GM12878 (cell line): ENCODE measurements at regions of chr21 and their contacts with region 1.

Region 1: GRCh38 chr21:33924079-33924765 is 8.6 kb upstream of the ATP5PO start:
- DNase-seq: peak; percentile 67
- ATAC-seq: peak; percentile 99
- H3K4me3 ChIP-seq: no peak overlapping the region
- H3K27ac ChIP-seq: no peak overlapping the region
- H3K4me1 ChIP-seq: peaks cover 7% of the 10 kb centered on the region
- H3K27me3 ChIP-seq: no peaks in the 10 kb centered on the region
- CTCF ChIP-seq: peak; percentile 87 to 98 (median 91); a peak in 5 of 6 replicates
- EP300 ChIP-seq: no peak
- POLR2A ChIP-seq: no peak
- RAD21 ChIP-seq: peak; percentile 100

Region 2: GRCh38 chr21:33848249-33848953 is 75.8 kb before region 1 on chr21:
- CTCF ChIA-PET with region 1: no interaction called
- POLR2A ChIA-PET with region 1: no interaction called
- RAD21 ChIA-PET with region 1: no interaction called
- SMC1A ChIA-PET with region 1: no interaction called
- in situ Hi-C with region 1: no loop called
- intact Hi-C with region 1: no loop called
- DNase-seq: no peak
- ATAC-seq: peak; percentile 69
- H3K4me3 ChIP-seq: no peak overlapping the region
- H3K27ac ChIP-seq: no peak overlapping the region
- H3K4me1 ChIP-seq: no peaks in the 10 kb centered on the region
- H3K27me3 ChIP-seq: no peaks in the 10 kb centered on the region
- CTCF ChIP-seq: no peak
- EP300 ChIP-seq: no peak
- POLR2A ChIP-seq: no peak
- RAD21 ChIP-seq: no peak

Region 3: DNA sequence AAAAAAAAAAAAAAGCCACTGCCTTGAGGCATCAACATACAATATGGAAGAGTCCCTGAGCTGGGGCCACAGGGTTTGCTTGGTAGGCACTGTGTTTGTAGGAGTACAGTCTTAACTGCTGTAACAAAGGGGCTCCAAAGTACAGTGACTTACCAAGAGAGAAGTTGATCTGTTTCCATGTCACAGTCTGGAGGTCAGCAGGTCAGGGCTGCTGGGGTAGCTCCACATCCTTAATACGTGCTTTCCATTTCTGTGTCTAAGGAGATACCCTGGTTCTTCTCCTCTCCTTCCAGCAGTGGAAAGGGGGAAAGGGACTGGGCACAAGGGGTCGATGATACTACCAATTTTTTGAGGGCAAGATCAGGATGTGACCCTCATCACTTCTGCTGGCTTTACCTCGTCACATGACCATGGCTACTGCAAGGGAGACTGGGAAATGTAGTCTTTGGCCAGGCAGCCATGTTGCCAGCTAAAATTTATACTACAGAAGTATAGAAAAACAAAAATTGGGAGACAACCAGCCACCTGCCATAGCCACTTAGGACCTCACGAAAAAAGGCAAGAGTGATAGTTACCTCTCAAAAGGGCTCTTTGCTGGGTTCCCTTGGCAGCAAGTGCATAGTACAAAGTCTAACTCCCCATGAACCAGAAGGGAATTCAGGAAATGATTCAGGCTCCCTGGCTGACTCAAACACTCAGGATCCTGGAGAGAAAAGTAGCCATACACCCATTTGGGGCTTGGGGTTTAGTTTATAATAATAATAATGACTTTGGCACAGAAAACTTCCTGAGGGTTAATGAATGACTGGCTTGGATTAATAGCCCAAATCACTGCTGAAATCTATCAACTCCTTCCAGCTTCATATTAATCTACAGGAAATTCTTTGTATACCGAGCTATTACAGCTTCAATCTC is 44.1 kb after region 1 on chr21:
- CTCF ChIA-PET with region 1: interaction called, 21 read pairs
- POLR2A ChIA-PET with region 1: no interaction called
- RAD21 ChIA-PET with region 1: interaction called, 15 read pairs
- SMC1A ChIA-PET with region 1: interaction called, 45 read pairs
- in situ Hi-C with region 1: no loop called
- intact Hi-C with region 1: no loop called
- DNase-seq: no peak
- ATAC-seq: peak; percentile 96
- H3K4me3 ChIP-seq: no peak overlapping the region
- H3K27ac ChIP-seq: no peak overlapping the region
- H3K4me1 ChIP-seq: no peaks in the 10 kb centered on the region
- H3K27me3 ChIP-seq: no peaks in the 10 kb centered on the region
- CTCF ChIP-seq: no peak
- EP300 ChIP-seq: no peak
- POLR2A ChIP-seq: no peak
- RAD21 ChIP-seq: no peak

Region 4: DNA sequence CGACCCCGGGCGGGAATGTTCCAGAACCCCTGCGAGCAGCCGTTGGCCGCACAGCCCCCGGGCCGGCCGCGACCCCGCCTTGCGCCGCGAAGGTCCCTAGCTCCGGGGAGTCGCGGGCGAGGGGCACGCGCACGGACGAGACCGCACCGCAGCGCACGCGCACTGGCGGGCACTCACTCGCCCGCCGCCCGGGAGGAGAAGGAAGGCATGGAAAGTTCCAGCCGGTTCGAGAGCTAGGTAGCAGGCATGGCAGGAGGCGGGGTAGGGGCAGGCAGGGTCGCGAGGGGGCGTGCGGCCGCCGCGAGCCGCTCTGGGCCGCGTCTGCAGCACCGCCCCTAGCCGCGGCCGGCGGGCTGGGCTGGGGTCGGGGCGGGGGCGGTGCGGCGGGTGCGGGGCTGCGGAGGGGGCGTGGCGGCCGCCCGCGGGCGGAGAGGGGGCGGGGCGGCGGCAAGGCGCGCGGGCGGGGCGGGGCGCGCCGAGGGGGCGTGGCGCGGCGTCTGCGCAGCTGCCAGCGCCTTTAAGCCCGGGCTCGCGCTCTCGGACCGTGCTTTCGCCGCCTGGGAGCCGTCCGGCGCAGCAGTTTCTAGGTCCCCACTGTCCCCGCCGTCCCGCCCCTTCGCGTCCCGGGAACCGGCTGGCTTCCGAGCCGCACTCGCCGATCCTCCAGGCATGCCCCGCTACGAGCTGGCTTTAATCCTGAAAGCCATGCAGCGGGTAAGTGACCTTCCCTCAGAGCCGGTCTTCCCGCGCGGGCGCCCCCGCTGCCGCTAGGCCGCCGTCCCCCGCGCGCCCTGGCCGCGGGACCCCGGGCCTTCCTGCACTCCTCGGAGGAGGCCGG is 149.0 kb after region 1 on chr21 and contains the starts of genes MRPS6 and SLC5A3:
- CTCF ChIA-PET with region 1: interaction called, 29 read pairs
- POLR2A ChIA-PET with region 1: interaction called, 3 read pairs
- RAD21 ChIA-PET with region 1: interaction called, 20 read pairs
- SMC1A ChIA-PET with region 1: interaction called, 41 read pairs
- in situ Hi-C with region 1: no loop called
- intact Hi-C with region 1: loop called (anchors 5 kb)
- DNase-seq: no peak
- ATAC-seq: peak; percentile 75
- H3K4me3 ChIP-seq: peak within 1 kb of the TSS; percentile 91
- H3K27ac ChIP-seq: peak within 1 kb of the TSS; percentile 72
- H3K4me1 ChIP-seq: peaks cover 11% of the 10 kb centered on the region
- H3K27me3 ChIP-seq: no peaks in the 10 kb centered on the region
- CTCF ChIP-seq: no peak; a peak in 1 of 6 replicates
- EP300 ChIP-seq: no peak; a peak in 1 of 4 replicates
- POLR2A ChIP-seq: peak; percentile 98
- RAD21 ChIP-seq: no peak
- polyA plus RNA-seq, gene MRPS6: 55.6 to 95.2 TPM
- polyA plus RNA-seq, gene SLC5A3: 3.3 to 4.7 TPM

Region 5: GRCh38 chr21:34100790-34101189 is 176.6 kb after region 1 on chr21:
- CTCF ChIA-PET with region 1: interaction called, 16 read pairs
- POLR2A ChIA-PET with region 1: interaction called, 3 read pairs
- RAD21 ChIA-PET with region 1: interaction called, 4 read pairs
- SMC1A ChIA-PET with region 1: interaction called, 4 read pairs
- in situ Hi-C with region 1: no loop called
- intact Hi-C with region 1: no loop called
- DNase-seq: no peak
- ATAC-seq: no peak
- H3K4me3 ChIP-seq: no peak overlapping the region
- H3K27ac ChIP-seq: no peak overlapping the region
- H3K4me1 ChIP-seq: peaks cover 7% of the 10 kb centered on the region; the same call in 1 of the 2 replicates
- H3K27me3 ChIP-seq: no peaks in the 10 kb centered on the region
- CTCF ChIP-seq: no peak
- EP300 ChIP-seq: no peak
- POLR2A ChIP-seq: no peak
- RAD21 ChIP-seq: no peak

Region 6: GRCh38 chr21:34243562-34243961 is 319.3 kb after region 1 on chr21:
- CTCF ChIA-PET with region 1: interaction called, 41 read pairs
- POLR2A ChIA-PET with region 1: no interaction called
- RAD21 ChIA-PET with region 1: interaction called, 27 read pairs
- SMC1A ChIA-PET with region 1: interaction called, 29 read pairs
- in situ Hi-C with region 1: no loop called
- intact Hi-C with region 1: loop called (anchors 5 kb)
- DNase-seq: no peak
- ATAC-seq: 0 out of 3 replicates have a peak, but pooled peaks have one; percentile 48
- H3K4me3 ChIP-seq: no peak overlapping the region
- H3K27ac ChIP-seq: no peak overlapping the region
- H3K4me1 ChIP-seq: no peaks in the 10 kb centered on the region
- H3K27me3 ChIP-seq: no peaks in the 10 kb centered on the region
- CTCF ChIP-seq: peak; percentile 43 to 60 (median 49); a peak in 5 of 6 replicates
- EP300 ChIP-seq: no peak
- POLR2A ChIP-seq: no peak
- RAD21 ChIP-seq: peak; percentile 58

Region 7: DNA sequence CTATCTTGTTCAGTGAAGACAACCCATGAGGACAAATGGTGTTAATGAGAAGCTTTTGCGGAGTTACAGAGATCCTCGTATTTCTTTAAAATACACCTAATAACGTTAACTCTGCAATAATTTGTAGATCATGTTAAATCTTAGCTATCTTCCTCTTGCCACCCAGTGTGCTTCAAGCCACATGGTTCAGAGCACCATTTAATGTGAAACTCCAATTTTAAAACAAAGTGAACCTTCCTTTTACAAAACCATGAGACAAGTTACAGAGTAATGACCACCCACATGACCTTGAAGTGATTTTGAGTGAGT is 437.9 kb after region 1 on chr21:
- CTCF ChIA-PET with region 1: interaction called, 19 read pairs
- POLR2A ChIA-PET with region 1: no interaction called
- RAD21 ChIA-PET with region 1: interaction called, 11 read pairs
- SMC1A ChIA-PET with region 1: interaction called, 13 read pairs
- in situ Hi-C with region 1: no loop called
- intact Hi-C with region 1: no loop called
- DNase-seq: no peak
- ATAC-seq: peak; percentile 24; the same call in 2 of the 3 replicates
- H3K4me3 ChIP-seq: no peak overlapping the region
- H3K27ac ChIP-seq: no peak overlapping the region
- H3K4me1 ChIP-seq: no peaks in the 10 kb centered on the region
- H3K27me3 ChIP-seq: peaks cover 0 to 3% of the 10 kb centered on the region in 2 experiments; a peak in 1 of 4 replicates
- CTCF ChIP-seq: no peak
- EP300 ChIP-seq: no peak
- POLR2A ChIP-seq: no peak
- RAD21 ChIP-seq: no peak